ENCODE measurements at regions of chr7 and their contacts with region 1.

Region 1: GRCh38 chr7:97027427-97028234 is 3.0 kb upstream of the DLX5 start:
- DNase-seq: peak; percentile 70 to 77
- H3K4me3 ChIP-seq: no peak overlapping the region
- H3K4me3 Mint-ChIP-seq: peak overlapping the region; percentile 51
- H3K27ac Mint-ChIP-seq: no peak overlapping the region
- H3K4me1 ChIP-seq: no peaks in the 10 kb centered on the region; the same call in 1 of the 2 replicates
- H3K4me1 Mint-ChIP-seq: peaks cover 6% of the 10 kb centered on the region
- H3K27me3 ChIP-seq: no peaks in the 10 kb centered on the region; the same call in 1 of the 2 replicates
- H3K27me3 Mint-ChIP-seq: peaks cover 34% of the 10 kb centered on the region
- CTCF ChIP-seq: peak; percentile 82 to 85

Region 2: DNA sequence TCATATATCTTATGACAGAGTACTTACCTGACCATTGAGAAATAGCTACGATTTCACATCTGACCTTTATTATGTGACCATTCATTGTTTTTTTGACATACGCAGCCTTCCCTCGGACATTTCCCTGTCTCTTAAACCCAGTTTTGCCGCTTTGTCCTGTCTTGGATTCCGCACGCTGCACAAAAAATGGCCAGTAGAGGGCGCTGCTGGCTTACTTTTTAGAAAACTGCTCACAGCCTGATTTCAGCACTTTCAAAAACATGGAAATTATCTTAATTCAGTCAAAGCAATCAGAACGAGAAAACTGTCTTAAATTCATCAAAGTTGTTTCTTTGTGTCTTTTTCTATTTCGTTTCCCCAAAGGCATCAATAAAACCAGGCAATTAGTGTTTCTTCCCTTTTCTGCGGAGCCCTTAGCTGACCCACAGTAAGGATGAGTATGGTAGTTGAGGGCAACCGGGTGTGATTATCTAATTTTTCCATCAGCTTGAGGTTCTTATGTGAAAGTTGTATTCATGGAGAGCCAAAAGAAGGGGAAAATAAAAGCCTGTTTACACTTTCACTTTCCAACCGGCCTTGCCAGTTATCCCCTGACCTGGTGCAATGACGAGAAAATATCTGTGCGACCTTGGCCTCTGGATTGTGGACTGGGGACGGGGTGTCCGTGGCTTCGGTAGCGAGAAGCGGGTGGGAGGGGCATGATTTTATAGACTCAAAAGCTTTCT is 1110.9 kb before region 1 on chr7:
- CTCF ChIA-PET with region 1: interaction called, 3 read pairs
- POLR2A ChIA-PET with region 1: no interaction called
- intact Hi-C with region 1: loop called (anchors 1 kb)
- DNase-seq: peak; percentile 61 to 77
- H3K4me3 ChIP-seq: no peak overlapping the region
- H3K4me3 Mint-ChIP-seq: no peak overlapping the region
- H3K27ac Mint-ChIP-seq: no peak overlapping the region
- H3K4me1 ChIP-seq: no peaks in the 10 kb centered on the region
- H3K4me1 Mint-ChIP-seq: no peaks in the 10 kb centered on the region
- H3K27me3 ChIP-seq: no peaks in the 10 kb centered on the region
- H3K27me3 Mint-ChIP-seq: no peaks in the 10 kb centered on the region
- CTCF ChIP-seq: peak; percentile 87 to 88

Region 3: DNA sequence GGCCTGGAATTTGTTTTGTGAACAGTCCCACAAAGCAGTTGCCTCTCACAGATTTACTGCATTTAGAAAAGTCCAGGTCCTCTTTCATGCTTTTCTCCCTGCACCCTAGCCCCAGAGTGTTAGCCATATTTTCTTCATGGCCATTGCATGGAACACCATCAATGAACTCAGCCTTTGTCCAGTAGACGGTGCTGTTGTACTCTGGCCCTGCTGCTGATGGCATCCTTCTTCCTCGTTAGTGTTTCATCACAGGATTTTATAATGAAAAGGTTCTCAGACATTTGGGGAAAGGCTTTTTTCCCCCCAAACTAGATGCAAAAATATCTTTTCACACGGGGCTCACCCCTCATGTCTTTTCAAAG is 612.7 kb before region 1 on chr7:
- CTCF ChIA-PET with region 1: no interaction called
- POLR2A ChIA-PET with region 1: no interaction called
- intact Hi-C with region 1: loop called (anchors 1 kb)
- DNase-seq: peak; percentile 37 to 45
- H3K4me3 ChIP-seq: no peak overlapping the region
- H3K4me3 Mint-ChIP-seq: no peak overlapping the region
- H3K27ac Mint-ChIP-seq: peak overlapping the region; percentile 33
- H3K4me1 ChIP-seq: peaks cover 18% of the 10 kb centered on the region
- H3K4me1 Mint-ChIP-seq: peaks cover 15% of the 10 kb centered on the region
- H3K27me3 ChIP-seq: no peaks in the 10 kb centered on the region
- H3K27me3 Mint-ChIP-seq: no peaks in the 10 kb centered on the region
- CTCF ChIP-seq: peak; percentile 27 to 45

Region 4: DNA sequence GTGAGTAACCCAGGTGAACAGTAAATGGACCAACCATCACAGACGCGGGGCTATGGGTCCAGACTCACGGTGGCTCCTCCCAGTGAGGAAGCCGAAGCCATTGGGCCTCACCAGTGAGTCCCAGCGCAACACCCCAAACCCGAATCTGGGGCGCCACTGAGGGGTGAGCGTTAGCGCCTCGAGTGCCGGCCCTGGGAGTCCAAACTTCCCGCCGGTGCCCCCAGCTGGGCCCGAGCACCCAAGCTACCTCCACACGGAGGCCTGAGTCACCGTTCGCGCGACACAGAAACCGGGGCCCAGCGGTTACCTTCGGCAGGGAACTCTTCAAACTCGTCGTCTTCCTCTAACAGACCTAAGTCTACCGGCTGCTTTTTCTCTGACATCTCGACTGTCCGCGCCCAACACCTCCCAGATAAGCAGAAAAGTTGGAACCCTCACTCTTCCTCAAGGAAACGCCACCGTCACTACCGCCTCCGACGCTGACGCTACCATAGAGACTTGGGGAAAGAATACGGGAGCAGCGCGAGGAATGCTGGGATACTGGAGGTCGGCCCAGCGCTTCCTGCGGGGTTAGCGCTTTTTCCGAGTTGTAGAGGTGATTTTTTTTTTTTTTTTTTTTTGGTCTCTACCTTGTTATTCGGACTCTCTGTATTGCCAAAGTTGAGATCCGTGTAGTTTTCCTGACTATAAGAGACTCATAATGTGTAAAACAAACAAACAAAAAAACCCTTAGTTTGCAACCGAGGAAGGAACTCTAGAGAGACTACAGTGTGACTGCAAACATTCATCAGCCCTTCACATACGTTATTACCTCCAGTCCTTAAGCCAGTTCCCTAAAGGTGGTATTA is 318.0 kb before region 1 on chr7 and contains the start of gene SEM1:
- CTCF ChIA-PET with region 1: no interaction called
- POLR2A ChIA-PET with region 1: no interaction called
- intact Hi-C with region 1: loop called (anchors 10 kb)
- DNase-seq: peak; percentile 81 to 86
- H3K4me3 ChIP-seq: peak within 1 kb of the TSS; percentile 78
- H3K4me3 Mint-ChIP-seq: peak within 1 kb of the TSS; percentile 88
- H3K27ac Mint-ChIP-seq: peak within 1 kb of the TSS; percentile 98
- H3K4me1 ChIP-seq: peaks cover 11% of the 10 kb centered on the region
- H3K4me1 Mint-ChIP-seq: no peaks in the 10 kb centered on the region
- H3K27me3 ChIP-seq: no peaks in the 10 kb centered on the region
- H3K27me3 Mint-ChIP-seq: no peaks in the 10 kb centered on the region
- CTCF ChIP-seq: no peak
- total RNA-seq, gene SEM1: 116 and 123 TPM in 2 replicates

Region 5: GRCh38 chr7:96778263-96778662 is 249.4 kb before region 1 on chr7:
- CTCF ChIA-PET with region 1: interaction called, 4 read pairs
- POLR2A ChIA-PET with region 1: no interaction called
- intact Hi-C with region 1: loop called (anchors 1 kb)
- DNase-seq: peak in 1 of 2 experiments; percentile 34
- H3K4me3 ChIP-seq: no peak overlapping the region
- H3K4me3 Mint-ChIP-seq: no peak overlapping the region
- H3K27ac Mint-ChIP-seq: no peak overlapping the region
- H3K4me1 ChIP-seq: no peaks in the 10 kb centered on the region
- H3K4me1 Mint-ChIP-seq: no peaks in the 10 kb centered on the region
- H3K27me3 ChIP-seq: no peaks in the 10 kb centered on the region
- H3K27me3 Mint-ChIP-seq: peaks cover 16% of the 10 kb centered on the region
- CTCF ChIP-seq: peak; percentile 25 to 61

Region 6: DNA sequence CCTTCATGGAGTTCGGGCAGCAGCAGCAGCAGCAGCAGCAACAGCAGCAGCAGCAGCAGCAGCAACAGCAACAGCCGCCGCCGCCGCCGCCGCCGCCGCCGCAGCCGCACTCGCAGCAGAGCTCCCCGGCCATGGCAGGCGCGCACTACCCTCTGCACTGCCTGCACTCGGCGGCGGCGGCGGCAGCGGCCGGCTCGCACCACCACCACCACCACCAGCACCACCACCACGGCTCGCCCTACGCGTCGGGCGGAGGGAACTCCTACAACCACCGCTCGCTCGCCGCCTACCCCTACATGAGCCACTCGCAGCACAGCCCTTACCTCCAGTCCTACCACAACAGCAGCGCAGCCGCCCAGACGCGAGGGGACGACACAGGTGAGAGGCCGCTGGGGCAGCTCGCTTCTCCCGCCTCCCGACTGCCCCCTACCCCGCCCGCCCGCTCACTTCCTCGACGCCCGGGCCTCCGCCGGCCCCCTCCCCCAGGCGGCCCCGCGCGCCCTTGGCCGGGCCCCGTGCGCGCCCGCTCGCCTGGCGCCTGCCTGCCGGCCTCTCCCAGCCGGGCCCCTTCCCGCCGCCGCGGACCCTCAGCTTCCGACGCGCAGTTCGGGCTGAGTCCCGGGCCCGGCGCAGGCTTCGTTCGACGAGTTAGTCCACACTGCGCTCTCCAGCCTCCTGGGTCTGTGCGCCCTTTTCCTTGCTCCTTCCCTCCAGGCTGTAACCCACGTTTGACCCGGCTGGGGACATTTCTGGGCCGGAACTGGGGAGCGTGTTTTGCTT is 21.4 kb before region 1 on chr7:
- CTCF ChIA-PET with region 1: interaction called, 13 read pairs
- POLR2A ChIA-PET with region 1: interaction called, 4 read pairs
- intact Hi-C with region 1: loop called (anchors 2 kb)
- DNase-seq: peak; percentile 82
- H3K4me3 ChIP-seq: peak overlapping the region; percentile 80
- H3K4me3 Mint-ChIP-seq: peak overlapping the region; percentile 86
- H3K27ac Mint-ChIP-seq: peak overlapping the region; percentile 66
- H3K4me1 ChIP-seq: peaks cover 6% of the 10 kb centered on the region; the same call in 1 of the 2 replicates
- H3K4me1 Mint-ChIP-seq: no peaks in the 10 kb centered on the region
- H3K27me3 ChIP-seq: no peaks in the 10 kb centered on the region
- H3K27me3 Mint-ChIP-seq: no peaks in the 10 kb centered on the region
- CTCF ChIP-seq: no peak

Region 7: GRCh38 chr7:97016381-97017191 is 11.0 kb before region 1 on chr7:
- CTCF ChIA-PET with region 1: interaction called, 10 read pairs
- POLR2A ChIA-PET with region 1: no interaction called
- intact Hi-C with region 1: loop called (anchors 1 kb)
- DNase-seq: peak; percentile 53 to 60
- H3K4me3 ChIP-seq: peak overlapping the region; percentile 37
- H3K4me3 Mint-ChIP-seq: peak overlapping the region; percentile 78
- H3K27ac Mint-ChIP-seq: no peak overlapping the region
- H3K4me1 ChIP-seq: no peaks in the 10 kb centered on the region
- H3K4me1 Mint-ChIP-seq: no peaks in the 10 kb centered on the region
- H3K27me3 ChIP-seq: no peaks in the 10 kb centered on the region; the same call in 1 of the 2 replicates
- H3K27me3 Mint-ChIP-seq: peaks cover 28% of the 10 kb centered on the region
- CTCF ChIP-seq: no peak

Measured in Caco-2 (cell line).